B cell (primary cell): ENCODE measurements at regions of chr7 and their contacts with region 1.

Region 1: DNA sequence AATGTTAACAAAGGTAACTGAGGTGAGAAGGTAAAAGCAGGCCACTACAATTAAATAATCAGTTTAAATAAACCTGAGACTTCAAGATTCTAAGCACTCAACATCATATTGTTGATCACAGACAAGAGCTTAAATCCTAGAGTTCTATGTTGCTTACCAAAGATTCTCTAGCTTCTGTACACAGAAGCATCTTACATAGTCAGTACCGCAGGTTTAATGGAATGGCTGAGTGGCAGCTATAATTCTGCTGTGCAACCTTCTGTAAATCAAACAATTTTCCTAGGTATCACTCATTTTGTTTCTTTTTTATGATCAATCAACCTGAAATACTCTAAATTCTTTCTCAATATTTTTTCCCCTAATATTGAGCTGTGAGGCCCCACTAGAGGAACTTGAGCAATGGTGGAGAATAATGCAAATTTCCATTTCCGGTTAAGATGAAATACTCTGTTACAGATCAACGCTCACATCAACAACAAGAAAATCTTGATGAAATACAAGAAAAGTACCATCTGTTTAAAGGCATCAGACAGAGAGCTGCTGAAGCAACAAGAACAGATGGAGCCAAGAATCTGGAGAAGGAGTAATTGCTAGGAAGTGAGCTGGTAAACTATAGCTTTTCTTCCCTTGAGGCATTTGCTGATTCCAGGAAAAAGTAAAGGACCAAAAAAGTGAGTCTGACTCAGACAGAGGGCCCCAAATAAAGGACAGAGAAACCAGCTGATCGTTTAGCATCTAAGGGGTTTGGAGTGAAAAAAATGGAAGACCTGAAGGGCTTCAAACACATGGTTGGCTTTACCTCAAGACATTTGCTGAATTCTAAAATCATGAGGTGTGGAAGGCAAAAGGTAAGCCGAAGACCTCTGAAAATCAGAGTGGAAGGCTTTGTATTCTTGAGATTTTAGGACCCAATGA is 22.6 kb downstream of the PNPLA8 start:
- DNase-seq: peak; percentile 81
- ATAC-seq: peak; percentile 94
- H3K4me3 ChIP-seq: peak overlapping the region; percentile 29 to 51 (median 40)
- H3K4me3 Mint-ChIP-seq: peak overlapping the region; percentile 90
- H3K27ac ChIP-seq: peak overlapping the region; percentile 91 to 95
- H3K27ac Mint-ChIP-seq: peak overlapping the region; percentile 100
- H3K4me1 ChIP-seq: peaks cover 37 to 40% of the 10 kb centered on the region in 2 donors
- H3K4me1 Mint-ChIP-seq: peaks cover 51% of the 10 kb centered on the region
- H3K27me3 ChIP-seq: no peaks in the 10 kb centered on the region
- H3K27me3 Mint-ChIP-seq: no peaks in the 10 kb centered on the region
- CTCF ChIP-seq: no peak

Region 2: GRCh38 chr7:108434010-108434409 is 69.4 kb before region 1 on chr7:
- CTCF ChIA-PET with region 1: no interaction called
- POLR2A ChIA-PET with region 1: no interaction called
- intact Hi-C with region 1: no loop called
- DNase-seq: no peak
- ATAC-seq: no peak
- H3K4me3 ChIP-seq: no peak overlapping the region
- H3K4me3 Mint-ChIP-seq: no peak overlapping the region
- H3K27ac ChIP-seq: no peak overlapping the region
- H3K27ac Mint-ChIP-seq: no peak overlapping the region
- H3K4me1 ChIP-seq: no peaks in the 10 kb centered on the region
- H3K4me1 Mint-ChIP-seq: no peaks in the 10 kb centered on the region
- H3K27me3 ChIP-seq: peaks cover 0 to 25% (median 15%) of the 10 kb centered on the region in 4 experiments
- H3K27me3 Mint-ChIP-seq: peaks cover 32% of the 10 kb centered on the region
- CTCF ChIP-seq: no peak

Region 3: GRCh38 chr7:108468246-108468645 is 35.1 kb before region 1 on chr7:
- CTCF ChIA-PET with region 1: interaction called, 15 read pairs
- POLR2A ChIA-PET with region 1: no interaction called
- intact Hi-C with region 1: loop called (anchors 1 kb)
- DNase-seq: no peak
- ATAC-seq: no peak
- H3K4me3 ChIP-seq: no peak overlapping the region
- H3K4me3 Mint-ChIP-seq: peak overlapping the region; percentile 71
- H3K27ac ChIP-seq: no peak overlapping the region
- H3K27ac Mint-ChIP-seq: no peak overlapping the region
- H3K4me1 ChIP-seq: peaks cover 9 to 11% of the 10 kb centered on the region in 2 donors
- H3K4me1 Mint-ChIP-seq: peaks cover 9% of the 10 kb centered on the region
- H3K27me3 ChIP-seq: peaks cover 0 to 15% (median 7%) of the 10 kb centered on the region in 4 experiments
- H3K27me3 Mint-ChIP-seq: peaks cover 24% of the 10 kb centered on the region
- CTCF ChIP-seq: no peak

Region 4: GRCh38 chr7:108515013-108515412 is 11.6 kb after region 1 on chr7:
- CTCF ChIA-PET with region 1: interaction called, 4 read pairs
- POLR2A ChIA-PET with region 1: interaction called, 3 read pairs
- intact Hi-C with region 1: loop called (anchors 1 kb)
- DNase-seq: no peak
- ATAC-seq: no peak
- H3K4me3 ChIP-seq: no peak overlapping the region
- H3K4me3 Mint-ChIP-seq: no peak overlapping the region
- H3K27ac ChIP-seq: peak overlapping the region in 1 of 2 donors; percentile 19
- H3K27ac Mint-ChIP-seq: no peak overlapping the region
- H3K4me1 ChIP-seq: peaks cover 10 to 13% of the 10 kb centered on the region in 2 donors
- H3K4me1 Mint-ChIP-seq: peaks cover 56% of the 10 kb centered on the region
- H3K27me3 ChIP-seq: no peaks in the 10 kb centered on the region
- H3K27me3 Mint-ChIP-seq: no peaks in the 10 kb centered on the region
- CTCF ChIP-seq: no peak

Region 5: DNA sequence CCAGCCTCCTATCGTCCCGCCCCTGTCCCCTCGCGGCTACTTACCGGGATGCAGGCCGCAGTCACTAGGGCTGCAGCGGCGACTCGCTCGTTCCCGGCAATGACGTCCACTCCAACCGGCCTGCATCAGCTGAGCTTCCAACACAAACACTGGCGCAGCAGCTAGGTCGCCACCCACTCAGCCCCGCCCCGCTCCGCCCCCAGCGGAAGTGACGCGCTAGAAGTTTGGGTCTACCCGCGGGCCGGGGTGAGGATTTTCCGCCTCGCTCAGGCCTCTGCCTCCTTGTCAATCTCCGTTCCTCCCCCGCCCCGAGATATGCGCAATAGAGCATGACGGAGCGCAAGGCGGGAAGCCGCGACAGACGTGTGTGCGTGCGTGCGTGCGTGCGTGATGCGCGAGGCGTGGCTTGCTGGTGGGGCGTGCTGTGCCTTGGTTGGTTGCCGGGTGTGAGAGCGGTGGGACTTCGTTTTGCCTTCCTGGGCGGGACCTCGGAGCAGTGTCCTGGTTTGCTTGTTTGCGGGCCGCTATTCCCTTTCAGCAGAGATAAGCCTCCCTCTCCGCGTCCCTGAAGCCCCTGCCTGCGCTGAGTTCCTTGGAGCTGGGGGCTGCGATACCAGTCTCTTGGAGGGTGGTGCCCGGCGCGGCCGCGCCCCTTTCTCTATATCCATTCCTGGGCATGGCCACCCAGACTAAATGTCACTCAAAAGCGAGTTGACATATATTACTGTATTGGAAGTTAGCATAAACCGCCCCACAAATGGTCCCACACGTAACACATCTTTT is 22.8 kb after region 1 on chr7 and contains the start of gene PNPLA8:
- CTCF ChIA-PET with region 1: interaction called, 44 read pairs
- POLR2A ChIA-PET with region 1: interaction called, 21 read pairs
- intact Hi-C with region 1: loop called (anchors 1 kb)
- DNase-seq: peak; percentile 100
- ATAC-seq: peak; percentile 90
- H3K4me3 ChIP-seq: peak within 1 kb of the TSS; percentile 77 to 97 (median 94)
- H3K4me3 Mint-ChIP-seq: peak within 1 kb of the TSS; percentile 99
- H3K27ac ChIP-seq: peak within 1 kb of the TSS; percentile 94 to 97
- H3K27ac Mint-ChIP-seq: peak within 1 kb of the TSS; percentile 99
- H3K4me1 ChIP-seq: peaks cover 34 to 37% of the 10 kb centered on the region in 2 donors
- H3K4me1 Mint-ChIP-seq: peaks cover 46% of the 10 kb centered on the region
- H3K27me3 ChIP-seq: no peaks in the 10 kb centered on the region
- H3K27me3 Mint-ChIP-seq: no peaks in the 10 kb centered on the region
- CTCF ChIP-seq: no peak
- total RNA-seq, gene PNPLA8: 56.3 and 57.3 TPM in 2 replicates

Region 6: GRCh38 chr7:108541478-108541877 is 38.1 kb after region 1 on chr7:
- CTCF ChIA-PET with region 1: no interaction called
- POLR2A ChIA-PET with region 1: no interaction called
- intact Hi-C with region 1: no loop called
- DNase-seq: no peak
- ATAC-seq: no peak
- H3K4me3 ChIP-seq: no peak overlapping the region
- H3K4me3 Mint-ChIP-seq: no peak overlapping the region
- H3K27ac ChIP-seq: no peak overlapping the region
- H3K27ac Mint-ChIP-seq: no peak overlapping the region
- H3K4me1 ChIP-seq: peaks cover 5 to 8% of the 10 kb centered on the region in 2 donors
- H3K4me1 Mint-ChIP-seq: peaks cover 6% of the 10 kb centered on the region
- H3K27me3 ChIP-seq: no peaks in the 10 kb centered on the region
- H3K27me3 Mint-ChIP-seq: no peaks in the 10 kb centered on the region
- CTCF ChIP-seq: no peak

Region 7: GRCh38 chr7:108650467-108650866 is 147.1 kb after region 1 on chr7:
- CTCF ChIA-PET with region 1: no interaction called
- POLR2A ChIA-PET with region 1: no interaction called
- intact Hi-C with region 1: no loop called
- DNase-seq: no peak
- ATAC-seq: no peak
- H3K4me3 ChIP-seq: no peak overlapping the region
- H3K4me3 Mint-ChIP-seq: no peak overlapping the region
- H3K27ac ChIP-seq: no peak overlapping the region
- H3K27ac Mint-ChIP-seq: no peak overlapping the region
- H3K4me1 ChIP-seq: no peaks in the 10 kb centered on the region
- H3K4me1 Mint-ChIP-seq: no peaks in the 10 kb centered on the region
- H3K27me3 ChIP-seq: no peaks in the 10 kb centered on the region
- H3K27me3 Mint-ChIP-seq: peaks cover 12% of the 10 kb centered on the region
- CTCF ChIP-seq: no peak

Region 8: GRCh38 chr7:108662778-108663362 is 159.5 kb after region 1 on chr7:
- CTCF ChIA-PET with region 1: no interaction called
- POLR2A ChIA-PET with region 1: no interaction called
- intact Hi-C with region 1: no loop called
- DNase-seq: no peak
- ATAC-seq: no peak
- H3K4me3 ChIP-seq: no peak overlapping the region
- H3K4me3 Mint-ChIP-seq: no peak overlapping the region
- H3K27ac ChIP-seq: no peak overlapping the region
- H3K27ac Mint-ChIP-seq: no peak overlapping the region
- H3K4me1 ChIP-seq: no peaks in the 10 kb centered on the region
- H3K4me1 Mint-ChIP-seq: no peaks in the 10 kb centered on the region
- H3K27me3 ChIP-seq: peaks cover 0 to 3% (median 0%) of the 10 kb centered on the region in 4 experiments
- H3K27me3 Mint-ChIP-seq: peaks cover 11% of the 10 kb centered on the region
- CTCF ChIP-seq: no peak